Activated naive CD4-positive, alpha-beta T cell treated with anti-CD3 and anti-CD28 coated beads for 36 hours (primary cell): ENCODE measurements at regions of chr3 and their contacts with region 1.

Region 1: DNA sequence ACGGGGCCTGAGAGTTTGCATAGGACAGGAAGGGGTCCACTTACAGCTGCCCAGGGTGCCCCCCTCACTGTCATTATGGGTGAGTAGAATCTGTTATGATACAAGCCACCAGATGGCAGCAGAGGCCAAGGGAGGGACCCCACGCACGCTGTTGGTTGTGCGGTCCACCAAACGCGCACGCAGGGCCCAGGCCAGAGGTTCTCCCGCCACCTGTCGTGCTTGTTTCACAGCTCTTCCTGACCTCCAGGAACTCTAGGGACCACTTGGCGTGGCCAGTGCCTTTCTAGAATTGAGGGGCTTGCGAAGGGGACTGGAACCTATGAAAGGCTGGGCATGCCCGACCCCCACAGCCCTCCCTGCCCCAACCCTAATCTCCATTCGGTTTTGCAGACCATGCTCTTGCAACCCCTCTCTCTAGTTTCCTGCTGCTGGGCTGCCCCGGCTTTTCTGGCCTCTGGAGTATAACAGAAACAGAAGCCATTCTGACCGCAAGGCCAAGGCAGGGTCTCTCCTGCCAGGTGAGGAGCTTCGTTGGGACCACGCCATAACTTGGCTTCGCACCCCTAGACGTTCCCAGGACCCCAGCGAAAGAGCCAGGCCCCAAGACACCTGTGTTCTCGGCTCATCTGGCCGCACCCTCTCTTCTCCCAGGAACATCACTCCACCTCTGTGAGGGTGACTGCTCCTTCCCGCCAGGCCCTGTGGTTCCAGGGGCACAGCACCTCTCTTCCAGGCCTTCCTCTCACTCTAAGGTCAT is 46.0 kb downstream of the ALDH1L1 start:
- DNase-seq: peak; percentile 67
- H3K4me3 Mint-ChIP-seq: no peak overlapping the region
- H3K27ac Mint-ChIP-seq: no peak overlapping the region
- H3K4me1 Mint-ChIP-seq: no peaks in the 10 kb centered on the region
- H3K27me3 Mint-ChIP-seq: peaks cover 15% of the 10 kb centered on the region

Region 2: DNA sequence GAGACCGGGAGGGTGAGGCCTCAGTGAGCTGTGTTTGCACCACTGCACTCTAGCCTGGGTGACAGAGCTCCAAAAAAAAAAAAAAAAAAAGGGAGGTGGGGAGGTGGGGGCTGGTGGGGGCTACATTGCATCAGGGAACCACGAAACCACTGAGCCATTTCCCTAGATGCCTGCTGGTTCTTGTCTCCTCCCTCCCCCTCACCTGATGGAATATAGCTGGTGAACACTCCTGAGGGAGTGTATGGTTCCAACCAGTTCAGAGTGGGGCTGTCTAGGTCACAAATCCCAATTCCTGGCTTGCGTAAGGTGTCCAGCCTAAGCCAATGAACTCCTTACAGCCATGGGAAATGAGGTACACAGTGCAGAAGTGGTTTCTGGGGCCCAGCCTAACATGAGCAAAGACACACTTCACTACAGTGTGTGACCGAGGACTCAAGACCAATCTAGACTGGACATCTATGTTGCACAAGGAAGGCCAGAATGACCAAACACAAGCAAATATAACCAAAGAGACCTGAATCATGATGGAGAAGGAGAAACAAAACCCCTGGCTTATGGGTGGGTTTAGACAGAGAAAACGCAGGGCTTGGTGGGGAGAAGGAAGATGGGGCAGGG is 500.0 kb before region 1 on chr3:
- CTCF ChIA-PET with region 1: no interaction called
- intact Hi-C with region 1: no loop called
- DNase-seq: no peak
- H3K4me3 Mint-ChIP-seq: no peak overlapping the region
- H3K27ac Mint-ChIP-seq: no peak overlapping the region
- H3K4me1 Mint-ChIP-seq: no peaks in the 10 kb centered on the region
- H3K27me3 Mint-ChIP-seq: peaks cover 13% of the 10 kb centered on the region

Region 3: DNA sequence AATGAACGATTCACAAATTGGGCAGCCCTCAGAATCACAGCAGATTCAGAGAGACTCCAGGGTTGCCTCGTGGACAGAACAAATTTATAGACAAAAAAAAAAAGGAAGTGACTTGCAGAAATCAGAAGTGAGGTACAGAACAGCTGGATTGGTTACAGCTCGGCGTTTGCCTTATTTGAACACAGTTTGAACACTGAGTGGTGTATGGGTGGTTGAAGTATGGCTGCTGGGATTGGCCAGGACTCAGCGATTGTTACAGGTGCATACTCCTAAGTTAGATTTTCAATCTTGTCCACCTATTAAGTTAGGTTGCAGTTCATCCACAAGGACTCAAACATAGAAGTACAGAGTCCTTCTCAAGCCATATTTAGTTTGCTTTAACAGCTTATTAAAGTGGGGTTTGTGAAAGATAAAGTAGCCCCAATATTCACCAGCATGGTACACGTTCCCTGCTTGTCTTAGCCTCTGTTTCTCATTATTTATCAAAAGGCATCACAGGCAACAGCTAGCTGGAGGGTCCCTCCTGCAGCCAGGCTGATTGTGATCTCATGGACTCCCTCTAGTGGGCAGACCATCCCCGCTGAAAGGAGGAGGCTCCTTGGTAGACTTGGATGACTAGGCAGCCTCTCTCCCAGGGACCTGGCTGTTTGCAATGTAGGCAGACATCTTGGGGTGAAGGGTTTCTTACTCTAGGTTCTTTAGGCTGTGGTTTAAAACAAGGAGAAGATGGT is 63.6 kb after region 1 on chr3:
- CTCF ChIA-PET with region 1: interaction called, 37 read pairs
- intact Hi-C with region 1: loop called (anchors 1 kb)
- DNase-seq: peak; percentile 78
- H3K4me3 Mint-ChIP-seq: no peak overlapping the region
- H3K27ac Mint-ChIP-seq: no peak overlapping the region
- H3K4me1 Mint-ChIP-seq: no peaks in the 10 kb centered on the region
- H3K27me3 Mint-ChIP-seq: peaks cover 7% of the 10 kb centered on the region